OCI-LY7 (cell line): ENCODE measurements at regions of chr18 and their contacts with region 1.

Region 1: GRCh38 chr18:9055185-9055584 is 47.3 kb upstream of the NDUFV2 start:
- DNase-seq: no peak
- H3K4me3 ChIP-seq: no peak overlapping the region
- H3K27ac ChIP-seq: no peak overlapping the region
- H3K4me1 ChIP-seq: peaks cover 18% of the 10 kb centered on the region
- CTCF ChIP-seq: peak; percentile 78

Region 2: DNA sequence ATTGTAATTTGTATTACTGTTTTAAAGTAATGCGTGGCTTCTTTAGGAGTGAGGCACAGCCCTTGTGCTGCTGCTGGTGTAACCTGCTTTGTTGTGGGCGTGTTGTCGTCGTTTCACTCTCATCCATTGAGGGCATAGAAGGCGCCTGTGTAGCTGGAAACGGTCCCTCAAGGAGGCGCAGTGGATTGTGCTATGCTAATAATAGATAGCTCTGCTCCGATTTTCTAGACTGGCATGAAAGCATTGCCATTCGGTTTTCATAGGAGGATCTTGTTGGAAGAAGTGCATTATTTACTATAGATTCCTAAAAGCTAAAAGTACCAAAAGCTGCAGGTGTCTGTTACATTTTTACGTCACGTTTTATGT is 428.1 kb before region 1 on chr18:
- CTCF ChIA-PET with region 1: no interaction called
- POLR2A ChIA-PET with region 1: no interaction called
- intact Hi-C with region 1: no loop called
- DNase-seq: no peak
- H3K4me3 ChIP-seq: no peak overlapping the region
- H3K27ac ChIP-seq: no peak overlapping the region
- H3K4me1 ChIP-seq: peaks cover 9% of the 10 kb centered on the region
- CTCF ChIP-seq: no peak

Region 3: GRCh38 chr18:8654503-8655451 is 400.4 kb before region 1 on chr18:
- CTCF ChIA-PET with region 1: no interaction called
- POLR2A ChIA-PET with region 1: no interaction called
- intact Hi-C with region 1: loop called (anchors 5 kb)
- DNase-seq: peak; percentile 55
- H3K4me3 ChIP-seq: no peak overlapping the region
- H3K27ac ChIP-seq: no peak overlapping the region
- H3K4me1 ChIP-seq: peaks cover 5% of the 10 kb centered on the region
- CTCF ChIP-seq: peak; percentile 91

Region 4: DNA sequence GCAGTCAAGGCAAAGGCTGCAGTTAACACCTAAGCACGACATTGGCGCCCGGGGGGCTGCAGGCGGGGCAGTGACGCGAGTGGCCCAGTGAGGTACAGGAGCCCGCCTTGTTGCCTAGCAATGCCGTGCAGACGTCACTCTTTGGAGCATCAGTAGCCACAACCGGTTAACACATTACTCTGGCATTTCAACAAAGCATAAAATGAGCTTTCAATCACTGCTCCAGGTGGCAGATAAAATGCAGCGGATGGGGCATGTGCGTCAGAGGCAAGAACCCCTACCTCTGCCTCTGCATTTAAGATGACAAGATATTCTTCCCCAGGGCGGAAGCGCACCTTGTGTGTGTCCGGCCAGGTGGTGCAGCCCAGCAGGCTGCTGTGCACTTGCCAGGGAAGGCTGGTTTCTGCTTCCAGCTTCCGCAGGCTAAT is 210.4 kb before region 1 on chr18:
- CTCF ChIA-PET with region 1: no interaction called
- POLR2A ChIA-PET with region 1: no interaction called
- intact Hi-C with region 1: no loop called
- DNase-seq: no peak
- H3K4me3 ChIP-seq: no peak overlapping the region
- H3K27ac ChIP-seq: no peak overlapping the region
- H3K4me1 ChIP-seq: no peaks in the 10 kb centered on the region
- CTCF ChIP-seq: no peak